Right cardiac atrium (tissue), 5 donors: ENCODE measurements at regions of chr3 and their contacts with region 1.

Region 1: GRCh38 chr3:46976326-46977190 is at the start of gene CCDC12:
- DNase-seq: peak; percentile 95 to 97 (median 96)
- ATAC-seq: peak; percentile 91 to 92
- H3K4me3 ChIP-seq: peak within 1 kb of the TSS; percentile 79
- H3K27ac ChIP-seq: peak within 1 kb of the TSS; percentile 97
- H3K4me1 ChIP-seq: peaks cover 6% of the 10 kb centered on the region
- H3K27me3 ChIP-seq: no peaks in the 10 kb centered on the region
- total RNA-seq, gene CCDC12: 31.2 to 37.7 (median 34.2) TPM

Region 2: GRCh38 chr3:46935168-46935858 is 41.2 kb before region 1 on chr3:
- intact Hi-C with region 1: loop called in 2 of 4 experiments (anchors 5 kb)
- DNase-seq: peak; percentile 87 to 93 (median 91)
- ATAC-seq: peak; percentile 92 to 93
- H3K4me3 ChIP-seq: no peak overlapping the region
- H3K27ac ChIP-seq: peak overlapping the region; percentile 88
- H3K4me1 ChIP-seq: peaks cover 58% of the 10 kb centered on the region
- H3K27me3 ChIP-seq: no peaks in the 10 kb centered on the region

Region 3: DNA sequence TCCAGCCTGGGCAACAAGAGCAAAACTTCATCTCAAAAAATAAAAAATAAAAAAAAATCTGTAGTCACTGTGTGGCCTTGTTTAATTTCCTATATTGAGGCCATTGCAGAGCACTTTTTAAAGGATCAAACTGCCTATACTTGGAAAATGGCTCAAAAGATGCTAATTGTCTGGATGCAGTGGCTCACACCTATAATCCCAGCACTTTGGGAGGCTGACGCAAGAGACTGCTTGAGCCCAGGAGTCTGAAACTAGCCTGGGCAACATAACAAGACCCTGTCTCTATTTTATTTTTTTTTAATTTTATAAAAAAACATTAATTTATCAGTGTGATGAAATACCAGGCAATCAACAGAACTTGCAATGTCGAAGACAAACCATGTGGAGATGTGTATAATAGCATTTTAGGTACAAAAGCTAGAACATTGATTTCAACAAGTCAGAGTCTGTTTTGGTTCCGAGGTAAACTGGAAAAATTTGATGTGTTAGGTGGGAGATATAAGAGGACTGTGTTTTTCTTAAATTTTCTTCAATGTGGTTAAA is 234.4 kb after region 1 on chr3:
- intact Hi-C with region 1: no loop called
- DNase-seq: no peak
- ATAC-seq: no peak
- H3K4me3 ChIP-seq: no peak overlapping the region
- H3K27ac ChIP-seq: no peak overlapping the region
- H3K4me1 ChIP-seq: no peaks in the 10 kb centered on the region
- H3K27me3 ChIP-seq: no peaks in the 10 kb centered on the region